SK-N-SH (cell line): ENCODE measurements at regions of chr12 and their contacts with region 1.

Region 1: DNA sequence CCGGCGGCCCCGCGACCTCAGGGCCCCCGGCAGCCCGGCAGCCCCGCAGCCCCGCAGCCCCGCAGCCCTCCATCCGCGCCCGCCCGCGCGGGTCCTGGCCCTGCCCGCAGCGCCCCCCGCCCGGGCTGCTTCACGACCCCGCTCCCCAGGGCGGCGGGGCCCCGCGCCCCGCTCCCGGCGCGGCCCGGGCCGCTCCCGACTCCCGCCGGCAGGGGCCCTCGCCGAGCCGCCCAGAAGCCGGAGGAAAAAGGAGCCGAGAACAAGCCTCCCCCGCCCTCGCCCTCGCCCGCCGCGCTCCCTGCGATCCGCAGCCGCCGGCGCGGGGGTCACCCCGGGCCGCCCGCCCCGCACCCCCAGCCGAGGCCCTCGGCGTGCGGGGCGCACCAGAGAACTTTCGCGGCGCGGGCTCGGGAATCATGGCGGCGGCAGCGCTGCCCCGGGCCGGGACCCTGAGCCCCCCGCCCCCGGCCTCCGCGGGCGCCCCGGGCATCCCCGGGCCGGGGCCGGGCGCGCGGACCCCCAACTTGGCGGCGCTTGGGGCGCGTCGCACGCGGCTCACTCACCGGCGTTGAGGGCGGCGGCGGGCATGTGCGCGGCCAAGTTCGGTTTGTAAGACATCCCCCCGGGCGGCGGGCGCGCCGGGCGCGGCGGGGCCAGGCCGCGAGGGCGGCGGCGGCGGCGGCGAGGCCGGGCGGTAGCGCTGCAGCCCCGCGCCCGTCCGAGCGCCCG is 491 bp downstream of the CDK2AP1 start:
- DNase-seq: peak; percentile 89
- H3K4me3 ChIP-seq: peak overlapping the region; percentile 83 to 90; a peak in 3 of 4 replicates
- H3K27ac ChIP-seq: peak overlapping the region in 1 of 2 experiments; percentile 99; a peak in 2 of 4 replicates
- H3K4me1 ChIP-seq: peaks cover 5 to 42% of the 10 kb centered on the region in 2 experiments; a peak in 3 of 4 replicates
- H3K27me3 ChIP-seq: no peaks in the 10 kb centered on the region
- CTCF ChIP-seq: peak; percentile 14; the same call in 1 of the 2 replicates
- EP300 ChIP-seq: no peak
- RAD21 ChIP-seq: peak; percentile 54

Region 2: GRCh38 chr12:122865268-122866231 is 405.6 kb before region 1 on chr12:
- CTCF ChIA-PET with region 1: no interaction called
- POLR2A ChIA-PET with region 1: no interaction called
- DNase-seq: peak; percentile 79
- H3K4me3 ChIP-seq: no peak overlapping the region
- H3K27ac ChIP-seq: peak overlapping the region in 1 of 2 experiments; percentile 22; a peak in 1 of 4 replicates
- H3K4me1 ChIP-seq: peaks cover 0 to 16% of the 10 kb centered on the region in 2 experiments; a peak in 1 of 4 replicates
- H3K27me3 ChIP-seq: no peaks in the 10 kb centered on the region
- CTCF ChIP-seq: peak; percentile 54
- EP300 ChIP-seq: no peak
- RAD21 ChIP-seq: peak; percentile 36

Region 3: GRCh38 chr12:123282111-123282510 is 10.9 kb after region 1 on chr12:
- CTCF ChIA-PET with region 1: interaction called, 11 read pairs
- POLR2A ChIA-PET with region 1: no interaction called
- DNase-seq: no peak
- H3K4me3 ChIP-seq: no peak overlapping the region
- H3K27ac ChIP-seq: no peak overlapping the region
- H3K4me1 ChIP-seq: no peaks in the 10 kb centered on the region; a peak in 1 of 4 replicates
- H3K27me3 ChIP-seq: no peaks in the 10 kb centered on the region
- CTCF ChIP-seq: no peak
- EP300 ChIP-seq: no peak
- RAD21 ChIP-seq: no peak

Region 4: DNA sequence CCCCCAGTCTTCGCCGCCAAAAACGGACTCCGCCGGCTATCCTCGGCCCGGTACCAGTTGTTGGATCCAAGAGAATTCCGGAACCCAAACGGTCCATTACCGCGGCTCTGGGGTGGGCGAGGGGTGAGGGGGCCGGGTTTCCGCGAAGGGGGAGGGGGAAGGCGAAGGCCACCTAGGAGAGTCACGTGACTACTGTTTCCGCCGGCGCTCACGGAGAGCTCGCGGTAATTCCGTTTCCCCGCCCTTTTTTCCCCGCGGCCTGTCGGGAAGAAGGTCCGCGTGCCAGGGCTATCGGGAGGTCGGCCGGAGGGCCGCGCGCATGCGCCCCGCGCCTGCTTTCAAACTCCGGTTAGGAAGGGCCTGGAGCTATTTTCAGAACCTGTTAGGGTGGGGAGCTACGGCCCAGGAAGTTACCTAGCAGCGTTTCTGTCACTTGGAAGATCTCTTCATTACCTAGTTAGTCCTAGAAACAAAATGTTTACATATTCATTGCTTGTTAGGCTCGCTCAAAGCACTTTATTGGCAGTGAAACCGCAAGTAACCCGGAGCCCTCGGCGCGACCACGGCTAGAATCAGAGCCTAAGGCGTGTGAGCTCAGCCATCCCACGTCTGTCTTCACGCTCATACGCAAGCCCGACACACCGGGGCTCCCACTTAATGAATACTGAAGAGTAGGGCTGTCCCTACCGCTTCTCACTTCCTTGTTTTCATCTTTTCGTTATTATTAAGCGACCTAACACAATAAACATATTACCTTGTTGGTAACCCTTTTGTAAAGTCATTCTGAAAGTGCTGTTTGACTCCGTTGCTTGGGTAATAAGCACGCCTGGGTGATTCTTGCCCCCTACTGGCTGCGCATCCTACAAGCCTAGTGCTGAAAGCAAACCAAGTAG is 94.1 kb after region 1 on chr12:
- CTCF ChIA-PET with region 1: interaction called, 7 read pairs
- POLR2A ChIA-PET with region 1: interaction called, 10 read pairs
- DNase-seq: peak; percentile 97
- H3K4me3 ChIP-seq: peak overlapping the region; percentile 73 to 83
- H3K27ac ChIP-seq: peak overlapping the region; percentile 94 to 98
- H3K4me1 ChIP-seq: no peaks in the 10 kb centered on the region; a peak in 2 of 4 replicates
- H3K27me3 ChIP-seq: no peaks in the 10 kb centered on the region
- CTCF ChIP-seq: peak; percentile 84
- EP300 ChIP-seq: no peak
- RAD21 ChIP-seq: peak; percentile 67

Region 5: DNA sequence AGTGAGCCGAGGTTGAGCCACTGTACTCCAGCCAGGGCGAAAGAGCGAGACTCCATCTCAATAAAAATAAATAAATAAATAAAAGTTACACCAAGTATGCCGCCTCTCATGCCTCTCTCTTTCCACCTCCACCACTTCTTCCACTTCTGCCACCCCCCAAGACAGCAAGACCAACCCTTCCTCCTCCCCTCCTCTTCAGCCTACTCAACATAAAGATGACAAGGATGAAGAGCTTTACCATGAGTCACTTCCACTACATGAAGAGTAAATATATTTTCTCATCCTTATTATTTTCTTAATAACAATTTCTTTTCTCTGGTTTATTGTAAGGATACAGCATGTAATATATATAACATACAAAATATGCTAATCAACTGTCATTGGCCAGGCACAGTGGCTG is 309.6 kb after region 1 on chr12:
- CTCF ChIA-PET with region 1: interaction called, 11 read pairs
- POLR2A ChIA-PET with region 1: no interaction called
- DNase-seq: no peak
- H3K4me3 ChIP-seq: no peak overlapping the region
- H3K27ac ChIP-seq: no peak overlapping the region
- H3K4me1 ChIP-seq: peaks cover 6 to 8% of the 10 kb centered on the region in 2 experiments; a peak in 2 of 4 replicates
- H3K27me3 ChIP-seq: no peaks in the 10 kb centered on the region
- CTCF ChIP-seq: no peak
- EP300 ChIP-seq: no peak
- RAD21 ChIP-seq: no peak